ENCODE measurements at regions of chr3 and their contacts with region 1.

Region 1: DNA sequence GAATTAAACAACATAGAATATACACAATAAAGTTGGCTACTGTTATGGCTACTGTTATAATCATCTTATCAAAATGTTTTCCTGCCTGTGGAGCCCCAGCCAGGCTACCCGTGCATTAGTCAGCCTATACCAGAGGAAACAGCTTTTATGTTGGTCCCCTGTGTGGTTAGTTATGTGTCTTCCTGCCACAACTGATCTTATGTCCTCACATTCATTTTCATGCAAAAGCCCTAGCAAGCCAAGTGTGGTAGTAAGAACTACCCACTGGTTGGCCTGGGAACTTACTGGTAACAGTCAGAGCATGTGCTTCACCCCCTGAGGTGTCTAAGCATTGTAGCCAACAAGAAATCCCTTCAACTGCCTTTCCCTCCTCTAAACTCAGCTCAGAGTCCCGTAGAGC is 21.8 kb downstream of the MGLL start:
- DNase-seq: peak; percentile 60
- H3K4me3 ChIP-seq: peak overlapping the region; percentile 12; the same call in 1 of the 2 replicates
- H3K27ac ChIP-seq: peak overlapping the region; percentile 92
- H3K4me1 ChIP-seq: peaks cover 45% of the 10 kb centered on the region
- H3K27me3 ChIP-seq: no peaks in the 10 kb centered on the region

Region 2: GRCh38 chr3:126509597-126510307 is 1290.8 kb before region 1 on chr3:
- in situ Hi-C with region 1: no loop called
- DNase-seq: no peak
- H3K4me3 ChIP-seq: no peak overlapping the region
- H3K27ac ChIP-seq: no peak overlapping the region
- H3K4me1 ChIP-seq: 0 out of 2 replicates have a peak, but pooled peaks cover 4% of the 10 kb centered on the region
- H3K27me3 ChIP-seq: no peaks in the 10 kb centered on the region; the same call in 1 of the 2 replicates

Region 3: GRCh38 chr3:127697551-127698240 is 102.8 kb before region 1 on chr3:
- in situ Hi-C with region 1: loop called (anchors 10 kb)
- DNase-seq: peak; percentile 87
- H3K4me3 ChIP-seq: peak overlapping the region; percentile 17
- H3K27ac ChIP-seq: peak overlapping the region; percentile 80
- H3K4me1 ChIP-seq: peaks cover 25% of the 10 kb centered on the region
- H3K27me3 ChIP-seq: no peaks in the 10 kb centered on the region

Region 4: GRCh38 chr3:128343287-128344051 is 543.0 kb after region 1 on chr3:
- in situ Hi-C with region 1: no loop called
- DNase-seq: peak; percentile 19
- H3K4me3 ChIP-seq: no peak overlapping the region
- H3K27ac ChIP-seq: no peak overlapping the region
- H3K4me1 ChIP-seq: 0 out of 2 replicates have a peak, but pooled peaks cover 6% of the 10 kb centered on the region
- H3K27me3 ChIP-seq: no peaks in the 10 kb centered on the region

Measured in GM23248 (cell line).